CD8-positive, alpha-beta T cell (primary cell): ENCODE measurements at regions of chr13 and their contacts with region 1.

Region 1: GRCh38 chr13:95676762-95677563 is at the start of gene DNAJC3:
- DNase-seq: peak; percentile 94 to 99 (median 98)
- ATAC-seq: peak; percentile 94
- H3K4me3 ChIP-seq: peak within 1 kb of the TSS; percentile 81 to 88
- H3K4me3 Mint-ChIP-seq: peak within 1 kb of the TSS; percentile 94
- H3K27ac ChIP-seq: peak within 1 kb of the TSS; percentile 73 to 76
- H3K27ac Mint-ChIP-seq: peak within 1 kb of the TSS; percentile 94
- H3K4me1 ChIP-seq: peaks cover 30% of the 10 kb centered on the region
- H3K4me1 Mint-ChIP-seq: peaks cover 65% of the 10 kb centered on the region
- H3K27me3 ChIP-seq: no peaks in the 10 kb centered on the region
- H3K27me3 Mint-ChIP-seq: no peaks in the 10 kb centered on the region
- CTCF ChIP-seq: no peak
- total RNA-seq, gene DNAJC3: 26.2 to 28.5 TPM

Region 2: DNA sequence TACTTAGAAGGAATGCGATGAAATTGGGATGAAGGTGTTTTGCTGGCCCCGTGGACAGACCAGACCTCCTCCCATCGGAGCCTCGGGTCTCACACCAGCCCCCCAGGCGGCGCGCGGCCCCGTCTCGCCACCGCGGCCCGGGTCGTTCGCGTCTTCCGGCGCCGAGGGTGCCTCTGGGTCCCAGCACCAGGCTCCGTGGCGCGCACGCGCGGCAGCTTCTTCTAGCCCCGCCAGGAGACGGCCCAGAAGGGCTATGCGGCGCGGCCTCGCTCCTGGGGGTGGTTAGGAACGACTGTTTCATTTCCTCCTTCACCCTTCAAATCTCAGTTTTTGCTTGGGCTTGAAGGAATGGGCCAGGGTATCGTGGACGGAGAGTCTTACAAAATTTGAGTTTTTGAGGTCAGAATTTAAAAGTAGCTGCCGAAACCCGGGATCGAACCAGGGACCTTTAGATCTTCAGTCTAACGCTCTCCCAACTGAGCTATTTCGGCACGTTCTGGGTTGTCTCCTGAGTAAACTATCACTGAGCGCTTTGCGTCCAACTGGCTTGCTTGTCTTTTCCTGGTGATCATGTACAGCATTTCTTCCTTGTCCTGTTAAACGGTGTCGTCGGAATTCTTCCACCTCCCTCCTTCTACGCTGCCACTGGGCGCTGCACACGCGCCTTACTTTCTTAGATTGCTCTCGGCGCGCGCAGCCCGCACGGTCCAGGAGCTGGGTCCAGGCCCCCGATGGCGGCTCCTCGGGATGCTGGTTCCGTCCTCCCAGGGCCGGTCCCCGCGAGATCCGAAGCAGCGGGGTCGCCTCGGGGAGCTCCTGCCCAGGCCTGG is 1127.5 kb before region 1 on chr13:
- CTCF ChIA-PET with region 1: no interaction called
- POLR2A ChIA-PET with region 1: no interaction called
- intact Hi-C with region 1: loop called (anchors 2 to 10 kb)
- DNase-seq: peak; percentile 86 to 96 (median 92)
- ATAC-seq: peak; percentile 88
- H3K4me3 ChIP-seq: peak overlapping the region; percentile 76 to 84
- H3K4me3 Mint-ChIP-seq: peak overlapping the region; percentile 91
- H3K27ac ChIP-seq: peak overlapping the region; percentile 90 to 92
- H3K27ac Mint-ChIP-seq: peak overlapping the region; percentile 97
- H3K4me1 ChIP-seq: peaks cover 13% of the 10 kb centered on the region
- H3K4me1 Mint-ChIP-seq: peaks cover 21% of the 10 kb centered on the region
- H3K27me3 ChIP-seq: no peaks in the 10 kb centered on the region
- H3K27me3 Mint-ChIP-seq: peaks cover 2% of the 10 kb centered on the region
- CTCF ChIP-seq: no peak

Region 3: DNA sequence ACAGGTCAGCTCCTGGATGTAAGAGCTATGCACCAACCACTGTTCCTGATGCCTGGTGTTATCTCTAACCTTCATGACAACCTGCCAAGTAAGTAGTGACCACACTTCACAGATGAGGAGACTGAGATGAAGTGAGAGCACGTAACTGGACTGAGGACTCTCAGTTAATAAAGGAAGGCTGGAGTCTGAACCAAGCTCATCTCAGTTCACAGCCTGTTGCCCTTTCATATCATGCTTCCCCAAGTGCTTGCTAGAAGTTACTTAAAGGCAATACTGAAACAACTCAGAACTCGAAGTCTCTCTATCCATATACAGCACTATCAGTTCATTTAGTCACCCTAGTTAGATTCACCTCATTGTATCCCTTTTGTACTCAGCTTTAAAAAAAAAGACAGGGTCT is 495.4 kb before region 1 on chr13:
- CTCF ChIA-PET with region 1: no interaction called
- POLR2A ChIA-PET with region 1: no interaction called
- intact Hi-C with region 1: loop called (anchors 5 to 10 kb)
- DNase-seq: no peak
- ATAC-seq: no peak
- H3K4me3 ChIP-seq: no peak overlapping the region
- H3K4me3 Mint-ChIP-seq: no peak overlapping the region
- H3K27ac ChIP-seq: no peak overlapping the region
- H3K27ac Mint-ChIP-seq: no peak overlapping the region
- H3K4me1 ChIP-seq: peaks cover 49% of the 10 kb centered on the region
- H3K4me1 Mint-ChIP-seq: peaks cover 82% of the 10 kb centered on the region
- H3K27me3 ChIP-seq: no peaks in the 10 kb centered on the region
- H3K27me3 Mint-ChIP-seq: no peaks in the 10 kb centered on the region
- CTCF ChIP-seq: no peak

Region 4: GRCh38 chr13:95660981-95661581 is 15.9 kb before region 1 on chr13:
- CTCF ChIA-PET with region 1: no interaction called
- POLR2A ChIA-PET with region 1: no interaction called
- intact Hi-C with region 1: loop called in 1 of 2 experiments (anchors 2 kb)
- DNase-seq: peak in 2 of 9 experiments; percentile 44 to 52
- ATAC-seq: no peak
- H3K4me3 ChIP-seq: no peak overlapping the region
- H3K4me3 Mint-ChIP-seq: no peak overlapping the region
- H3K27ac ChIP-seq: no peak overlapping the region
- H3K27ac Mint-ChIP-seq: no peak overlapping the region
- H3K4me1 ChIP-seq: no peaks in the 10 kb centered on the region
- H3K4me1 Mint-ChIP-seq: no peaks in the 10 kb centered on the region
- H3K27me3 ChIP-seq: no peaks in the 10 kb centered on the region
- H3K27me3 Mint-ChIP-seq: peaks cover 15% of the 10 kb centered on the region
- CTCF ChIP-seq: peak; percentile 56

Region 5: GRCh38 chr13:95698047-95698749 is 21.2 kb after region 1 on chr13:
- CTCF ChIA-PET with region 1: no interaction called
- POLR2A ChIA-PET with region 1: no interaction called
- intact Hi-C with region 1: no loop called
- DNase-seq: no peak
- ATAC-seq: no peak
- H3K4me3 ChIP-seq: no peak overlapping the region
- H3K4me3 Mint-ChIP-seq: no peak overlapping the region
- H3K27ac ChIP-seq: no peak overlapping the region
- H3K27ac Mint-ChIP-seq: no peak overlapping the region
- H3K4me1 ChIP-seq: peaks cover 9% of the 10 kb centered on the region
- H3K4me1 Mint-ChIP-seq: peaks cover 52% of the 10 kb centered on the region
- H3K27me3 ChIP-seq: no peaks in the 10 kb centered on the region
- H3K27me3 Mint-ChIP-seq: no peaks in the 10 kb centered on the region
- CTCF ChIP-seq: peak; percentile 18

Region 6: DNA sequence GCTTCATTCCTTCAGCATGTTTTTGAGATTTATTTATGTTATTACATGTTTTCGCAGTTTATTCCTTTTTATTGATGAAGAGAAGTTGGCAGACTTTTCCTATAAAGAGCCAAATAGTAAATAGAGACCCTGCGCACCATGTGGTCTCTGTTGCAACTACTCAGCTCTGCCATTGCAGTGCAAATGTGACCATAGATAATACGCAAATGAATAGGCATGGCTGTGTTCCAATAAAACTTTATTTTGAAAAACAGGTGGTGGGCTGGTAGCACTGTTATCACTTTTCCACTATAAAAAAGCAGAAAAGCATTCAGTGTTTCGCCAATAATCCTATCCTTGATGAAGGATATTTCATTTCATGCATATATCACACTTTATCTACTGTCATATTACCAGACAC is 94.9 kb after region 1 on chr13:
- CTCF ChIA-PET with region 1: no interaction called
- POLR2A ChIA-PET with region 1: no interaction called
- intact Hi-C with region 1: loop called in 1 of 2 experiments (anchors 5 kb)
- DNase-seq: no peak
- ATAC-seq: no peak
- H3K4me3 ChIP-seq: no peak overlapping the region
- H3K4me3 Mint-ChIP-seq: no peak overlapping the region
- H3K27ac ChIP-seq: no peak overlapping the region
- H3K27ac Mint-ChIP-seq: no peak overlapping the region
- H3K4me1 ChIP-seq: no peaks in the 10 kb centered on the region
- H3K4me1 Mint-ChIP-seq: peaks cover 10% of the 10 kb centered on the region
- H3K27me3 ChIP-seq: no peaks in the 10 kb centered on the region
- H3K27me3 Mint-ChIP-seq: no peaks in the 10 kb centered on the region
- CTCF ChIP-seq: no peak

Region 7: GRCh38 chr13:97432917-97433726 is 1756.2 kb after region 1 on chr13:
- CTCF ChIA-PET with region 1: no interaction called
- POLR2A ChIA-PET with region 1: interaction called, 14 read pairs
- intact Hi-C with region 1: loop called (anchors 2 kb)
- DNase-seq: peak; percentile 95 to 99 (median 98)
- ATAC-seq: peak; percentile 70
- H3K4me3 ChIP-seq: peak overlapping the region; percentile 79 to 100
- H3K4me3 Mint-ChIP-seq: peak overlapping the region; percentile 94
- H3K27ac ChIP-seq: peak overlapping the region; percentile 97 to 100
- H3K27ac Mint-ChIP-seq: peak overlapping the region; percentile 100
- H3K4me1 ChIP-seq: peaks cover 12% of the 10 kb centered on the region
- H3K4me1 Mint-ChIP-seq: peaks cover 30% of the 10 kb centered on the region
- H3K27me3 ChIP-seq: no peaks in the 10 kb centered on the region
- H3K27me3 Mint-ChIP-seq: no peaks in the 10 kb centered on the region
- CTCF ChIP-seq: no peak